AG04449 (cell line): ENCODE measurements at regions of chr18 and their contacts with region 1.

Region 1: DNA sequence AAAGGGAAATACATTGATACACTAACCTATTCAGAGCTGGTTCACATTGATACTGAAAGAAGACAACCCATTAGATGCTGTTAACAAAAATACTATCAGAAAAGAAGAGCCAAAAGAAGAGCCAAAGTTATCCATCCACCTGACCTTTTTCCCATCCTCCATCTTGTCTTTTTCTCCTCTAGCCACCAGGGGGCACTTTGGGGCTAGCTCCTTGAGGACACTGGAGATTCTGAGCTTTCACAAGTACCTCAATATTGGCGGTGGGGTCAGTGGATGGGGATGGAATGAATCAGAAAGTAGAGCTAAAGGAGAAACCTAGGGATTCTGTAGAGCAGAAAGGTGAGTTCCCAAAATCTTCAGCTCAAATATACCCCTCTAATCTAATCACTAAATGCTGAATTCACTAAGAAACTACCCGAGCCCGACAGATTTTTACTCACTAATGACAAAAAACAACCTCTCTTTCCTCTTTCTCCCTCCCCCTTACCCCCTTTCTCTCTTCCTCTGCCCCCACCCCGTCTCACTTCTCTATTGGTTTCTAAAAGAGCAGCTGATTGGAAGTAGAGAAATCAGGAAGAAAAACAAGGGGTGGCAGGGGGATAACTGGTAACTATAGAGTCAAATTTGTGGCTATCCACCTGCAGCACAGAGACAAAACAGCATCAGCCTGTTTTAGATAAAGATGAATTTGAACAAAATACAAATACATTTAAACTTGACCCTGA is 203.3 kb downstream of the TCF4 start:
- DNase-seq: no peak
- H3K4me3 ChIP-seq: no peak overlapping the region
- CTCF ChIP-seq: peak; percentile 56

Region 2: GRCh38 chr18:55395799-55396198 is 11.1 kb after region 1 on chr18:
- CTCF ChIA-PET with region 1: interaction called, 18 read pairs
- POLR2A ChIA-PET with region 1: no interaction called
- DNase-seq: no peak
- H3K4me3 ChIP-seq: no peak overlapping the region
- CTCF ChIP-seq: no peak

Region 3: GRCh38 chr18:55400590-55401541 is 16.2 kb after region 1 on chr18:
- CTCF ChIA-PET with region 1: interaction called, 18 read pairs
- POLR2A ChIA-PET with region 1: no interaction called
- DNase-seq: no peak
- H3K4me3 ChIP-seq: peak overlapping the region; percentile 43
- CTCF ChIP-seq: no peak